Activated CD8-positive, alpha-beta T cell treated with anti-CD3 and anti-CD28 coated beads for 36 hours (primary cell): ENCODE measurements at regions of chr11 and their contacts with region 1.

Region 1: DNA sequence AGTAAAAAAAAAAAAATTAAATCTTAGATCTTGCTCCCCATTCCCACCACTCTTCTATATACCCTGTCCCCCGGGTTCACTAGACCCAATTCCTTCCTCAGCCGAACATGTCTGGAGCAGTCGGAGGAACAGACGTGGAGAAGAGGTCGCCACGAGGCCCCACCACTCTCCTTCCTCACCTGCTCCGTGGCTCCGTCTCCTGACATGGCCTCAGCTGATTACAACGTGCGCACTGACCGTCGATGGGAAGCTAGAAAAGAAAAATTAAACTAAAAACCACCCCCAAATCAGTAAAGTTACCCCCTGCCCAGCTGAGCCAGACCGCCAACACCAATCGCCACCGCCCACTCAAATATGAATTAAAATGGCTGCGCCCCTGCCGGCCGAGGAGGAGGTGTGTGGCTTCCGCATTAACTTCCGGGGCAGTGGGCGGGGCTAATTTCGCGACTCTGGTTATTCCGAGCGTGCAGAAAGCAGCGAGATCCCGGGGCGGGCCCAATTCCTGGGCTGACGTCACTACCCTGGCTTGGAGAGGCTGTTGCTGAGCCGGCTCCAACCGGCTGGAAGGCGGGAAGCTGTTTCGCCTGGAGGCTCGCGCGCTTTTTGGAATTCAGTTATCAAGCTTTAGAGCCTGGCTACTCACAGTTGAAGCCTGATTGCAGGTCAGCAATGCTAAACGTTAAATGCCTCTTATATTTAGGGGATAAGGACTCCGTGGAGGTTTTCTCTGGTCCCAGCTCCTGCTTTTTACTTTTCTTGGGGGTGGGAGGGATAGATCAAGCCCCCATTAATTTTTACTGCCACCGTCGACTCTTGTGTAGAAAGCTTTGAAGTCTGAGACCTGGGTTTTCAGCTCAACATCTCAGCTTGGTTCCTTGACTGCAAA is at the start of gene CSTF3:
- DNase-seq: peak; percentile 98
- ATAC-seq: peak; percentile 97
- H3K4me3 Mint-ChIP-seq: peak within 1 kb of the TSS; percentile 99
- H3K27ac Mint-ChIP-seq: peak within 1 kb of the TSS; percentile 99
- H3K4me1 Mint-ChIP-seq: peaks cover 39% of the 10 kb centered on the region
- H3K27me3 Mint-ChIP-seq: no peaks in the 10 kb centered on the region
- CTCF ChIP-seq: no peak
- total RNA-seq, gene CSTF3: 34.9 to 40.6 TPM

Region 2: DNA sequence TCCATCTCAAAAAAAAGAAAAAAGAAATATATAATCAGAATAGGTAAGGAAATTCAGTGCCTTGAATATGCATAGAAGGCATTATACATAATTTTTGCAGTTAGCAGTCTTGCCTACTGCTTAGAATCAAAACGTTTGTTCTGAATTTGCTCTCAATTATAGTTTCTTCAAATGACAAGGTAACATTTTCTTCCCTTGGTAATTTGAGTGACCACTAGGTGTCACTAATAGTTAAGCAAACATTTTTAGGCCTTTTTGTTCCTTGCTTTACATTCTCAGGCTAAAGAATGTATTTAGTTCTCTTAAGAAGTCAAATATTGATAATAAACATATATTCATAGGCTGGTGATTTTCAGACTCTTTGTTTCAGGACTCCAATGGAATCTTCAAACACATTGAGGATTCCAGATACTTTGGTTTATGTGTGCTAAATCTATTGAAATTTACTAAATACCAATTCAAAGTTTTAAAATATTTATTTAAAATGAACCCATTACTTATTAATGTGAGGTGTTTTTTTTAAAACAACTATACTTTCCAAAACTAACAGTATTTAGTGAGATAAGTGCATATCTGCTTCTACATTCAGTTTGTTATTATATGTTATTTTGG is 200.7 kb before region 1 on chr11:
- CTCF ChIA-PET with region 1: interaction called, 3 read pairs
- POLR2A ChIA-PET with region 1: no interaction called
- intact Hi-C with region 1: loop called (anchors 10 kb)
- DNase-seq: no peak
- ATAC-seq: no peak
- H3K4me3 Mint-ChIP-seq: no peak overlapping the region
- H3K27ac Mint-ChIP-seq: no peak overlapping the region
- H3K4me1 Mint-ChIP-seq: peaks cover 10% of the 10 kb centered on the region
- H3K27me3 Mint-ChIP-seq: no peaks in the 10 kb centered on the region
- CTCF ChIP-seq: peak; percentile 71

Region 3: DNA sequence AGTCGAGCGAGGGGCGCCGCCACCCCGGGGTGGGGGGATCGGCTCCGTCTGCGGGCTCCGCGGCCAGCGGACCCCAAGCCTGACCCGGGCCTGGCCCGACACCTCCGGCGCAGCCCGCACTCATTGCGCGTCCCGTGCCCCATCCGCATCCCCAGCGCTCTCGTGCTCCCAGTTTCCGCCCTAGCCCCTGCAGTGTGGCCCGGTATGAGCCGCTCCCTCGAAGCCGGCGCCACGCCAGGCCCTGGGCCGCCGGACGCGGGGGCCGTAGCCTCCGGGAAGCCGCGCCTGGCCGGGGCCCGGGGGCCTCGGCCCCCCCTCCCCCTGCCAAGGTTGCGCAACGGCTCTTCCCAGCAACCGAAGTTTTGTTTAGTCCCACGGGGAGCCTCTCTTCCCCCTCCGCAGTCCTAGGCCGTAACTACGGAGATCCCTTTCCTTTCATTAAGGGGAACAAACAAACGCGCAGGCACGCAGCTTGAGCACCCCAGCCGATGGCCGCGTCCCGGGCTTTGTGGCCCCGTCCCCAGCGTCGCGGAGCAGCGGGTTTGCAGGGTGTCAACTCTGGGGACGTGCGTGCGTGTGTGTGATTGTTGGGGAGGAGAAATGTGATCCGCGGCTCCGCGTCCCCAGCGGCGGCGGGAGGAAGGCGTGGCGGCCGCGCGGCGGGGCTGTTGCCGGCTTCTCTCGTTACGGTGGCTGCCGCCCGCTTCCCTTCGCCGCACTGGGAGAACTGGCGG is 96.7 kb after region 1 on chr11:
- CTCF ChIA-PET with region 1: interaction called, 3 read pairs
- POLR2A ChIA-PET with region 1: interaction called, 5 read pairs
- intact Hi-C with region 1: loop called (anchors 10 kb)
- DNase-seq: peak; percentile 81
- ATAC-seq: peak; percentile 50
- H3K4me3 Mint-ChIP-seq: peak overlapping the region; percentile 97
- H3K27ac Mint-ChIP-seq: peak overlapping the region; percentile 99
- H3K4me1 Mint-ChIP-seq: peaks cover 40% of the 10 kb centered on the region
- H3K27me3 Mint-ChIP-seq: no peaks in the 10 kb centered on the region
- CTCF ChIP-seq: no peak

Region 4: GRCh38 chr11:33329705-33330329 is 168.5 kb after region 1 on chr11:
- CTCF ChIA-PET with region 1: interaction called, 45 read pairs
- POLR2A ChIA-PET with region 1: no interaction called
- intact Hi-C with region 1: loop called (anchors 2 kb)
- DNase-seq: peak; percentile 61
- ATAC-seq: peak; percentile 58
- H3K4me3 Mint-ChIP-seq: no peak overlapping the region
- H3K27ac Mint-ChIP-seq: no peak overlapping the region
- H3K4me1 Mint-ChIP-seq: peaks cover 14% of the 10 kb centered on the region
- H3K27me3 Mint-ChIP-seq: no peaks in the 10 kb centered on the region
- CTCF ChIP-seq: peak; percentile 75